CD8-positive, alpha-beta memory T cell (primary cell): ENCODE measurements at regions of chr10 and their contacts with region 1.

Region 1: DNA sequence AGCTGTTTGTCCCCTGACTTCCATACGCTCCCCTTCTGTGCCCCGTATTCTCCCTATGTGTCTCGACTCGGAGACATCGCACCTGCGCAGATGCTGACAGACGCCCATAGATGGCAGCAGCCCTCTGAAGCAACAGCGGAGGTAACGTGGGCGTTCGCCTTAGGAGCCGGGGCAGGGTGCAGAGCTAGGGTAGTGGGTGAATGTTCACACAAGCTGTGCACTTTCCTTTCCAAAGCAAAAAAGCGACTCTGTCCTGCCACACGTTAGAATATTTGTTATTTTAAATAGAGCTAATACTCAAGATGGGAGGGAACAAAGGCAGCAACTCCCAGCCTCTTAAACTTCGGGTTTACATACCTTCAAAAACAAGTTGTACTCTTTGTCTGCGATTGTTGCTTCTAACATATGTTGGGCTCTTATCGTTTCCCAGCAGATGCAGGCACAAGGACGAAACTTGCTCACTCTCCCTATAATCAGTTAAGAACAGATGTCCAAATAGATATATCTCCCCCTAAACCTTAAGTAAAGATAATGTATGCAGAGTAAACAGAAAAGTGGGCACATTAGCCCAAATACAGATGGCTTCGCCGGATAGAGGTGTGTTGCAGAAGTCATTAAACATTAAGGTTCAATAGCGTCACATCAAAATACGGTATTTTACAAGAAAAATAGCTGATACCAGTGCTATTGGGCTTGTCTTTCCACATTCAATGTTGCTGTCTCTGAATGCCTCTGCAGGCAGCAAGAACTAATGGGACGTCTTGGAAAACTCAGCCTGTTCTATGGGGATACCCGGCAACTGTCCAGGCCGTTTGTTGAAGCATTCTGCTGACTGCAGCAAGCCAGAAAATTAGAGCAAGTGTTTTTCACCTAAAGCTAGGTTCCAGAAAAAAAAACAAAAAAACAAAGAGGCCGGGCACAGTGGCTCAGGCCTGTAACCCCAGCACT is 340.3 kb upstream of the PRKCQ start:
- DNase-seq: peak; percentile 61 to 85 (median 62)
- H3K4me3 ChIP-seq: peak overlapping the region; percentile 5
- H3K4me3 Mint-ChIP-seq: peak overlapping the region in 6 of 7 donors; percentile 1 to 75 (median 49)
- H3K27ac ChIP-seq: peak overlapping the region; percentile 51
- H3K27ac Mint-ChIP-seq: peak overlapping the region in 2 of 8 donors; percentile 10 to 63
- H3K4me1 ChIP-seq: peaks cover 17% of the 10 kb centered on the region
- H3K4me1 Mint-ChIP-seq: peaks cover 22 to 37% (median 31%) of the 10 kb centered on the region in 3 donors
- H3K27me3 ChIP-seq: no peaks in the 10 kb centered on the region
- H3K27me3 Mint-ChIP-seq: peaks cover 0 to 2% of the 10 kb centered on the region in 2 donors

Region 2: DNA sequence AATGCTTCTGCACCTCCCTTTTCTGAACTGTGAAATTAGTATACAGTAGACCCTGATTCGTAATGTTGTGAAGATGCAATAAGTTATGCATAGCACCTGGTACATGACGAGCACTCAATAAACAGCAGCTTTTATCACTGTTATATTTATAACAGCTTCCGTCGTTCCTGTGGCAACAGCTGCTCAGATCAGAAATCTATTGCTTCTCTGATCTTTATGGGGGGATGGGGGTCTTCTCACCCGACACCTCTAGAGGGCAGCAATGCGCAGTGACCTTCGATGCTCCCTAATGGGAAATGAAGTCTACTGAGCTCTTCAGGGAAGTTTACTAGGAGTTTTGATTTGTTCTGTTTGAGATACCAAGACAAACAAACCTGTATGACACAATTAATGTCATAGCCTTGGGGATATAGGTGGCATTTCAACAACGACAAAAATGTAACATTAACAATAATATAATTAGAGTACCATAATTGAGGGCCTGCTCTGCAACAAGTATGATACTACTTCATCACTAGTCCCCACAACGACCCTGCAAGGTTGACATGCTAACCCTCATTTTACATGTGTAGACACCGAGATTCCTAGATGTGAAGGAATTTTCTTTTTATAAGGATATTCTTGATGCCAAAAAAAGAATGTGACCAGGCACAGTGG is 200.9 kb after region 1 on chr10:
- CTCF ChIA-PET with region 1: interaction called, 13 read pairs
- POLR2A ChIA-PET with region 1: no interaction called
- DNase-seq: peak; percentile 44 to 88 (median 73)
- H3K4me3 ChIP-seq: no peak overlapping the region
- H3K4me3 Mint-ChIP-seq: peak overlapping the region in 1 of 7 donors; percentile 1
- H3K27ac ChIP-seq: no peak overlapping the region
- H3K27ac Mint-ChIP-seq: peak overlapping the region in 7 of 8 donors; percentile 12 to 88 (median 76)
- H3K4me1 ChIP-seq: peaks cover 7% of the 10 kb centered on the region
- H3K4me1 Mint-ChIP-seq: peaks cover 9 to 14% (median 13%) of the 10 kb centered on the region in 3 donors
- H3K27me3 ChIP-seq: no peaks in the 10 kb centered on the region
- H3K27me3 Mint-ChIP-seq: peaks cover 0 to under 1% of the 10 kb centered on the region in 2 donors

Region 3: GRCh38 chr10:7410862-7411670 is 490.7 kb after region 1 on chr10 and contains the start of gene SFMBT2:
- CTCF ChIA-PET with region 1: interaction called, 40 read pairs
- POLR2A ChIA-PET with region 1: interaction called, 5 read pairs
- DNase-seq: peak; percentile 56 to 77 (median 62)
- H3K4me3 ChIP-seq: peak within 1 kb of the TSS; percentile 96
- H3K4me3 Mint-ChIP-seq: peak within 1 kb of the TSS; percentile 96 to 99 (median 98)
- H3K27ac ChIP-seq: peak within 1 kb of the TSS; percentile 84
- H3K27ac Mint-ChIP-seq: peak within 1 kb of the TSS; percentile 62 to 98 (median 92)
- H3K4me1 ChIP-seq: peaks cover 33% of the 10 kb centered on the region
- H3K4me1 Mint-ChIP-seq: peaks cover 33 to 45% (median 33%) of the 10 kb centered on the region in 3 donors
- H3K27me3 ChIP-seq: no peaks in the 10 kb centered on the region
- H3K27me3 Mint-ChIP-seq: peaks cover 0 to 8% of the 10 kb centered on the region in 2 donors
- total RNA-seq, gene SFMBT2: 17.4 to 18.3 TPM

Region 4: GRCh38 chr10:7424315-7424714 is 504.0 kb after region 1 on chr10:
- CTCF ChIA-PET with region 1: interaction called, 40 read pairs
- POLR2A ChIA-PET with region 1: no interaction called
- DNase-seq: peak in 2 of 5 donors; percentile 27 to 69
- H3K4me3 ChIP-seq: no peak overlapping the region
- H3K4me3 Mint-ChIP-seq: peak overlapping the region in 1 of 7 donors; percentile 12
- H3K27ac ChIP-seq: no peak overlapping the region
- H3K27ac Mint-ChIP-seq: peak overlapping the region in 4 of 8 donors; percentile 13 to 37 (median 32)
- H3K4me1 ChIP-seq: peaks cover 7% of the 10 kb centered on the region
- H3K4me1 Mint-ChIP-seq: peaks cover 8 to 17% (median 14%) of the 10 kb centered on the region in 3 donors
- H3K27me3 ChIP-seq: no peaks in the 10 kb centered on the region
- H3K27me3 Mint-ChIP-seq: peaks cover 0 to 1% of the 10 kb centered on the region in 2 donors

Region 5: GRCh38 chr10:8296090-8296733 is 1375.9 kb after region 1 on chr10:
- CTCF ChIA-PET with region 1: no interaction called
- POLR2A ChIA-PET with region 1: no interaction called
- DNase-seq: no peak
- H3K4me3 ChIP-seq: no peak overlapping the region
- H3K4me3 Mint-ChIP-seq: no peak overlapping the region
- H3K27ac ChIP-seq: no peak overlapping the region
- H3K27ac Mint-ChIP-seq: no peak overlapping the region
- H3K4me1 ChIP-seq: no peaks in the 10 kb centered on the region
- H3K4me1 Mint-ChIP-seq: no peaks in the 10 kb centered on the region
- H3K27me3 ChIP-seq: no peaks in the 10 kb centered on the region
- H3K27me3 Mint-ChIP-seq: peaks cover 8 to 9% of the 10 kb centered on the region in 2 donors